ENCODE measurements at regions of chr16 and their contacts with region 1.

Region 1: GRCh38 chr16:1863681-1864460 is 8.1 kb downstream of the MEIOB start:
- DNase-seq: no peak
- ATAC-seq: no peak
- H3K4me3 ChIP-seq: no peak overlapping the region
- H3K27ac ChIP-seq: no peak overlapping the region
- H3K4me1 ChIP-seq: peaks cover 3% of the 10 kb centered on the region
- H3K27me3 ChIP-seq: peaks cover 0 to 1% of the 10 kb centered on the region in 2 experiments; a peak in 1 of 5 replicates
- CTCF ChIP-seq: 0 out of 2 replicates have a peak, but pooled peaks have one; percentile 32
- EP300 ChIP-seq: no peak
- POLR2A ChIP-seq: no peak
- RAD21 ChIP-seq: peak; percentile 32; the same call in 1 of the 2 replicates

Region 2: DNA sequence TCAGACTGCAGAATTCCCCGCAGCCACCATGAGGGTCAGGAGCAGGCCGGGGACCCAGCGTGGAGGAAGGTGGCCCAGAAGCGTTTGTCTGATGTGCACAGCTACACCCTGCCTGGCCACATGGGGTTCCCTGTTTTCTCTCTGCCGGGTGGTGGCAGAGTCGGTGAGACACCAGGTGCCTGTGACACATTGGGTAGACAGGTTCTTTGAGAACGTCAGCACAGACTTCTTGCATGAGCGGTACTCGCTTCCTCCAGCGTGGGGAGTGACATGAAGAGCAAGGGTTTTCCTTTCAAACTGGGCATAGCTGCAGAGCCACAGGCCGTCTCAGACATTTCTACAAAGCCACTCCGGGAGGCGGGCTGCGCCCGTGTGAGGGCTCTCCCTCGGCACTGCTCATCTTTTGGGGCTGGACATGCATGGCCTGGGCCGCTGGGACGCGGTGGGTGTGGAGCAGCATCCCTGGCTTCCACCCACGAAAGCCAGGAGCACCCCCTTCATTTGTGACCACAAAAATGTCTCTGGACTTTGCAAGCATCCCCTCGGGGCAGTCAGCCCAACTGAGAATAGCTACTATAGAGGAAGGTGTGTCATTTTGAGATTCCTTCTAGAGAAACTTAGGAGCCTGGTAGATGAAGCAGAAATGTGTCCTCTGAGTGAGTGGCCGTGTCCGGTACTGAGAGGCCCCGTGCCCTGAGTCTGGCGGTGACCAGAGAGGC is 118.5 kb before region 1 on chr16:
- CTCF ChIA-PET with region 1: no interaction called
- POLR2A ChIA-PET with region 1: no interaction called
- in situ Hi-C with region 1: no loop called
- intact Hi-C with region 1: no loop called
- DNase-seq: no peak
- ATAC-seq: no peak
- H3K4me3 ChIP-seq: no peak overlapping the region
- H3K27ac ChIP-seq: no peak overlapping the region
- H3K4me1 ChIP-seq: no peaks in the 10 kb centered on the region
- H3K27me3 ChIP-seq: no peaks in the 10 kb centered on the region
- CTCF ChIP-seq: no peak
- EP300 ChIP-seq: no peak
- POLR2A ChIP-seq: no peak
- RAD21 ChIP-seq: no peak

Region 3: GRCh38 chr16:1757714-1758404 is 106.0 kb before region 1 on chr16:
- CTCF ChIA-PET with region 1: no interaction called
- POLR2A ChIA-PET with region 1: no interaction called
- in situ Hi-C with region 1: no loop called
- intact Hi-C with region 1: no loop called
- DNase-seq: no peak
- ATAC-seq: peak; percentile 18; the same call in 2 of the 3 replicates
- H3K4me3 ChIP-seq: no peak overlapping the region
- H3K27ac ChIP-seq: no peak overlapping the region
- H3K4me1 ChIP-seq: peaks cover 10% of the 10 kb centered on the region
- H3K27me3 ChIP-seq: no peaks in the 10 kb centered on the region
- CTCF ChIP-seq: no peak
- EP300 ChIP-seq: no peak
- POLR2A ChIP-seq: no peak
- RAD21 ChIP-seq: no peak

Region 4: GRCh38 chr16:1923299-1924034 is 59.6 kb after region 1 on chr16:
- CTCF ChIA-PET with region 1: interaction called, 4 read pairs
- POLR2A ChIA-PET with region 1: no interaction called
- in situ Hi-C with region 1: loop called (anchors 5 kb)
- intact Hi-C with region 1: no loop called
- DNase-seq: peak; percentile 50
- ATAC-seq: peak; percentile 52
- H3K4me3 ChIP-seq: peak overlapping the region in 1 of 3 experiments; percentile 38; a peak in 1 of 6 replicates
- H3K27ac ChIP-seq: no peak overlapping the region
- H3K4me1 ChIP-seq: peaks cover 48% of the 10 kb centered on the region
- H3K27me3 ChIP-seq: peaks cover 19 to 53% of the 10 kb centered on the region in 2 experiments
- CTCF ChIP-seq: peak; percentile 67
- EP300 ChIP-seq: peak in 1 of 2 experiments; percentile 49; a peak in 1 of 4 replicates
- POLR2A ChIP-seq: no peak
- RAD21 ChIP-seq: peak; percentile 15; the same call in 1 of the 2 replicates

Region 5: DNA sequence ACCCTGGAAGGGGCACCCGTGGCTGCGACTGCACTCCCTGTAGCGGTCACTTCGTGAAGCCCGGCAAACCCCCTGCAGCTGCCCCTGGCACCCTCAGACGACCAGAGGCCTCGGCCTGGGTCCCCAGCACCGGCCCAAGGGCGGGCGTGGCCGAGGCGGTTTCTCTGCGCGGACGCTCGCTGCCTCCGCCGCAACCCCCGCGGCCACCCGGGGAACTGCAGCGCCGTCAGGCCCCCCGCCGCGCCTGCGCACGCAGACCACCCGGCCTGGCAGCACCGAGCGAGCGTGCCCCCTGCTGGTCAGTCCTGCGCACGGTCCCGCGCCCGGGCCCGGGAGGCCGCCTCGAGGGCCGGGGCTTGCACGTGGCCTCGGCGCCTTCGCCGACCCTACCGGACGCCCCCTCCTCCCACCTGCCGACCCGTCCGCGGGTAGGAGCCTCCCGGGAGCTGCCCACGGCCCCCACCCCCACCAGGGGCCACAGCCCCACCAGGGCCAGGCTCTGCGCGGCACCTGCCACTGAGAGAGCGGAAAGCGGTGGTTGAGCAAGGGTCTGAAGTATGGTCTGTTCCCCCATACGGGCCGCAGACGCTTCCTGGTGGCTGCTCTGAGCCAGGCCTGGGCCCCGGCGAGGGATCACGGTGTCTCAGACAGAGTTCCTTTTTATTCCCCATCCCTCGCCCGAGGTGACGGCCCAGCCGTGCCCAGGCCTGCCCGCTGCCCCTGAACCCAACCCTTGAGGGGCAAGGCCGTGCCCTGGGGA is 65.9 kb after region 1 on chr16:
- CTCF ChIA-PET with region 1: interaction called, 22 read pairs
- POLR2A ChIA-PET with region 1: interaction called, 5 read pairs
- in situ Hi-C with region 1: loop called (anchors 5 kb)
- intact Hi-C with region 1: loop called (anchors 2 kb)
- DNase-seq: peak; percentile 55
- ATAC-seq: peak; percentile 56
- H3K4me3 ChIP-seq: peak overlapping the region; percentile 59 to 73 (median 70)
- H3K27ac ChIP-seq: peak overlapping the region; percentile 38
- H3K4me1 ChIP-seq: peaks cover 73% of the 10 kb centered on the region
- H3K27me3 ChIP-seq: peaks cover 3 to 6% of the 10 kb centered on the region in 2 experiments; a peak in 2 of 5 replicates
- CTCF ChIP-seq: peak; percentile 90
- EP300 ChIP-seq: no peak
- POLR2A ChIP-seq: peak; percentile 46 to 49; a peak in 3 of 4 replicates
- RAD21 ChIP-seq: peak; percentile 99

Measured in HepG2 (cell line).